ENCODE measurements at regions of chr6 and their contacts with region 1.

Region 1: GRCh38 chr6:34196126-34196830 is 40.4 kb upstream of the HMGA1 start:
- DNase-seq: peak; percentile 79 to 95 (median 88)
- ATAC-seq: peak; percentile 99
- H3K4me3 ChIP-seq: peak overlapping the region; percentile 90
- H3K4me3 Mint-ChIP-seq: peak overlapping the region; percentile 79 to 91 (median 87)
- H3K27ac ChIP-seq: peak overlapping the region; percentile 72
- H3K27ac Mint-ChIP-seq: peak overlapping the region in 5 of 9 donors; percentile 9 to 69 (median 61)
- H3K4me1 ChIP-seq: peaks cover 4 to 6% of the 10 kb centered on the region in 2 donors
- H3K4me1 Mint-ChIP-seq: peaks cover 0 to 11% (median 8%) of the 10 kb centered on the region in 7 donors
- H3K27me3 ChIP-seq: no peaks in the 10 kb centered on the region
- H3K27me3 Mint-ChIP-seq: peaks cover 0 to 13% (median 0%) of the 10 kb centered on the region in 5 donors

Region 2: DNA sequence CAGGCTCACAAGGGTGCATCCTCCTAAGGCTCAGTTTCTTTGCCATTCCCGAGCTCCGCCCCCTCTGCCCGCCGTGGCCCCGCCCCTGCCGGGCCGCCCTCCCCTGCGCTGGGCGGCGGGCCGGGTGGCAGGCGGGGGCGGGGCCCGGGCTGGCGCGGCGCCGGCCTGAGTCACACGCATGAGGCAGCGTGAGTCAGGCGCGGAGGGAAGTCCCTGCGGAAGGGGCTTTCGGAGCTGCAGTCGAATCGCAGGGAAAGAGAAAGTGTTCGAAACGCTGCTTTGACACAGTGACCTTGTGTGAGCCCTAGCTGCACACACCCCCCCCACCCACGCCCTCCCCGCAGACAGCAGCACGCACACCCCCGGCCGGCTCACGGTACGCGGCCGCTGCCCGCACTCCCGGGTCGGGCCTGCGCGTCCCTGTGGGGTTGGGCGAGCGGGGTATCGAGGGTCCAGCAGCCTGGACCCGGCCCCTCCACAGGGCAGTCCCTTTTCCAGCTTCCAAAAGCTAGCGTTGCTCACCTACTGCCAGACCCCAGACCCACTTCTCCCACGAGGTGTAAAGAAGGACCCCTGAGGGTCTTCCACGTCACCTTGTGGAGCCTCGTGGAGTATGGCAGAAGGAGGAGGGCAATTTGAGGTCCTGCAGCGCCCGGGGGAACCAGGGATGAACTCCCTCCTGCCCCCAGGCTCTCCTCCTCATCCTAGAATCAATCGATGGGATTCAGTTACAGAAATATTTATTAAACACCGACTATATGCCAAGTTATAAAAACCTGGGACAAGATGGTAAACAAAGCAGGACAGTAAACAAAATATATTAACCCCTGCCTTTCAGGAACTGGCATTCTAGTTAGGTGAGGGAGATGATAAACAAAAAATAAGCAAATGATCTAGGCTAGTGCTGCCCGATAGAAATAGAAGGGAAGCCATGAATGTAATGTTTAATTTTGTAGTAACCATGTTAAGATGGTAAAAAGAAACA is 28.0 kb after region 1 on chr6:
- CTCF ChIA-PET with region 1: interaction called, 11 read pairs
- POLR2A ChIA-PET with region 1: interaction called, 5 read pairs
- intact Hi-C with region 1: no loop called
- DNase-seq: peak; percentile 85 to 97 (median 91)
- ATAC-seq: peak; percentile 99
- H3K4me3 ChIP-seq: peak overlapping the region; percentile 78
- H3K4me3 Mint-ChIP-seq: peak overlapping the region; percentile 42 to 85 (median 76)
- H3K27ac ChIP-seq: peak overlapping the region; percentile 93
- H3K27ac Mint-ChIP-seq: peak overlapping the region; percentile 82 to 95 (median 88)
- H3K4me1 ChIP-seq: peaks cover 4 to 14% of the 10 kb centered on the region in 2 donors
- H3K4me1 Mint-ChIP-seq: peaks cover 5 to 40% (median 10%) of the 10 kb centered on the region in 7 donors
- H3K27me3 ChIP-seq: no peaks in the 10 kb centered on the region
- H3K27me3 Mint-ChIP-seq: no peaks in the 10 kb centered on the region

Region 3: GRCh38 chr6:34284563-34285447 is 88.5 kb after region 1 on chr6:
- CTCF ChIA-PET with region 1: no interaction called
- POLR2A ChIA-PET with region 1: no interaction called
- intact Hi-C with region 1: no loop called
- DNase-seq: no peak
- ATAC-seq: peak; percentile 85
- H3K4me3 ChIP-seq: no peak overlapping the region
- H3K4me3 Mint-ChIP-seq: peak overlapping the region in 2 of 10 donors; percentile 34 to 41
- H3K27ac ChIP-seq: no peak overlapping the region
- H3K27ac Mint-ChIP-seq: peak overlapping the region in 5 of 9 donors; percentile 53 to 77 (median 74)
- H3K4me1 ChIP-seq: peaks cover 0 to 3% of the 10 kb centered on the region in 2 donors
- H3K4me1 Mint-ChIP-seq: peaks cover 0 to 31% (median 26%) of the 10 kb centered on the region in 7 donors
- H3K27me3 ChIP-seq: no peaks in the 10 kb centered on the region
- H3K27me3 Mint-ChIP-seq: no peaks in the 10 kb centered on the region

Region 4: GRCh38 chr6:34414999-34415858 is 219.0 kb after region 1 on chr6:
- CTCF ChIA-PET with region 1: interaction called, 47 read pairs
- POLR2A ChIA-PET with region 1: interaction called, 13 read pairs
- intact Hi-C with region 1: loop called (anchors 1 kb)
- DNase-seq: peak in 7 of 9 donors; percentile 38 to 63 (median 56)
- ATAC-seq: peak; percentile 88
- H3K4me3 ChIP-seq: no peak overlapping the region
- H3K4me3 Mint-ChIP-seq: no peak overlapping the region
- H3K27ac ChIP-seq: no peak overlapping the region
- H3K27ac Mint-ChIP-seq: peak overlapping the region in 4 of 9 donors; percentile 17 to 56 (median 45)
- H3K4me1 ChIP-seq: no peaks in the 10 kb centered on the region
- H3K4me1 Mint-ChIP-seq: peaks cover 0 to 17% (median 9%) of the 10 kb centered on the region in 7 donors
- H3K27me3 ChIP-seq: no peaks in the 10 kb centered on the region
- H3K27me3 Mint-ChIP-seq: no peaks in the 10 kb centered on the region

Region 5: DNA sequence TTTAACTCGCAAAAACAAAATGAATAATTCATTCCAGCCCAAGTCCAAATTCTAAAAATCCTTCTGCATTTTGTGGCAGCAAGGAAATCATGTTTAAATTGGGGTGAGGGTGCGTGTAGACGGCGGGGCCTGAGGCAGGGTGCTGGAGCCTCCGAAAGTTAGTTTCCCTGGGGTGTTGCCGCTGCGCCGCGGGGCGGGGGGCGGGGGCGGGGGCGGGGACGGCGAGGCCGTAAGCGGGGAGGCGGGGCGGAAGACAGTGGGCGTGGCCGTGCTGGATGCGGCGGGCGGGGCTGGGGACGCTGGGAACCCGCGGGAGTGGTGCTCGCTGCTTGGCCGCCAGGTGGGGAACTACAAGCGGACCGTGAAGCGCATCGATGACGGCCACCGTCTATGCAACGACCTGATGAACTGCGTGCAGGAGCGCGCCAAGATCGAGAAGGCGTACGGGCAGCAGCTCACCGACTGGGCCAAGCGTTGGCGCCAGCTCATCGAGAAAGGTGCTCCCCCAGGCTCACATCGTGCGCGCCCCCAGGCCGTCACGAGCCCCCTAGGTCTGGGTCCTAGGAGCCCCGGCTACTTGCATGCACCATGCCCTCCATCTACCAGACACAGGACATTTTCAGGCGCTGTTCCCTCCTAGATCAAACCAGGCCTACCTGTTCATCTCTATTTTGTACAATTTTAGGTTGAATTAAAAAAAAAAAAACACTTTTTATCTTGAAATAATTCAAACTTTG is 330.9 kb after region 1 on chr6:
- CTCF ChIA-PET with region 1: no interaction called
- POLR2A ChIA-PET with region 1: no interaction called
- intact Hi-C with region 1: loop called in 1 of 2 experiments (anchors 1 kb)
- DNase-seq: peak; percentile 88 to 96 (median 94)
- ATAC-seq: peak; percentile 100
- H3K4me3 ChIP-seq: peak overlapping the region; percentile 33
- H3K4me3 Mint-ChIP-seq: peak overlapping the region; percentile 20 to 69 (median 46)
- H3K27ac ChIP-seq: peak overlapping the region; percentile 70
- H3K27ac Mint-ChIP-seq: peak overlapping the region; percentile 12 to 89 (median 72)
- H3K4me1 ChIP-seq: peaks cover 7 to 14% of the 10 kb centered on the region in 2 donors
- H3K4me1 Mint-ChIP-seq: peaks cover 4 to 12% (median 8%) of the 10 kb centered on the region in 7 donors
- H3K27me3 ChIP-seq: no peaks in the 10 kb centered on the region
- H3K27me3 Mint-ChIP-seq: peaks cover 0 to 2% (median 0%) of the 10 kb centered on the region in 5 donors

Region 6: GRCh38 chr6:35139908-35140655 is 943.8 kb after region 1 on chr6:
- CTCF ChIA-PET with region 1: no interaction called
- POLR2A ChIA-PET with region 1: no interaction called
- intact Hi-C with region 1: loop called in 1 of 2 experiments (anchors 1 kb)
- DNase-seq: peak in 6 of 9 donors; percentile 26 to 50 (median 42)
- ATAC-seq: peak; percentile 46
- H3K4me3 ChIP-seq: no peak overlapping the region
- H3K4me3 Mint-ChIP-seq: peak overlapping the region in 9 of 10 donors; percentile 1 to 76 (median 46)
- H3K27ac ChIP-seq: no peak overlapping the region
- H3K27ac Mint-ChIP-seq: peak overlapping the region in 2 of 9 donors; percentile 38 to 44
- H3K4me1 ChIP-seq: no peaks in the 10 kb centered on the region
- H3K4me1 Mint-ChIP-seq: peaks cover 13 to 22% (median 16%) of the 10 kb centered on the region in 7 donors
- H3K27me3 ChIP-seq: no peaks in the 10 kb centered on the region
- H3K27me3 Mint-ChIP-seq: peaks cover 8 to 35% (median 13%) of the 10 kb centered on the region in 5 donors

Region 7: DNA sequence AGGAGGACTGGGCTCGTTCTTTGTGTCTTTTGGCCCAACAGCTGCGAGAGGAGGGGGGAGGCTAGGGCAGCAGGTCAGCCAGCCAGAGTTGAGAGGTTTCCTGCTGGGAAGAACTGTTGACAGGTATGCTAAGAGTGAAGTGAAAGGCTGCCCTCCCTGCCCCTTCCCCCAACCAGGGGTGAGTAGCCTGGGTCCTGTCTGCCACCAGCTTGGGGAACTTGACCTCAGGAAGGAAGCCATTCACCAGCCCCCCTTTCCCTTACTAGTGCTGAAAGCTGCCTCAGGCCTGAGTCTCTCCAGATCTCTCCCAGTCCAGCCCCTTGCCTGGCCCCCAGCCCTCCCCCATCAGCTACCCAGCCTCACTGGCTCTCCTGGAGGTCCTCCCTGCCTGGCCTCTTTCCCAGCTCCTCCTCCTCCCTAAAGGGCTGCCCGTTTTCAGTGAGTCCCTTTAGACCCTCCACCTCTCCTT is 1042.6 kb after region 1 on chr6:
- CTCF ChIA-PET with region 1: no interaction called
- POLR2A ChIA-PET with region 1: no interaction called
- intact Hi-C with region 1: no loop called
- DNase-seq: no peak
- ATAC-seq: no peak
- H3K4me3 ChIP-seq: no peak overlapping the region
- H3K4me3 Mint-ChIP-seq: no peak overlapping the region
- H3K27ac ChIP-seq: no peak overlapping the region
- H3K27ac Mint-ChIP-seq: no peak overlapping the region
- H3K4me1 ChIP-seq: no peaks in the 10 kb centered on the region
- H3K4me1 Mint-ChIP-seq: peaks cover 1 to 6% (median 4%) of the 10 kb centered on the region in 7 donors
- H3K27me3 ChIP-seq: no peaks in the 10 kb centered on the region
- H3K27me3 Mint-ChIP-seq: peaks cover 0 to 6% (median 0%) of the 10 kb centered on the region in 5 donors

Measured in naive thymus-derived CD4-positive, alpha-beta T cell (primary cell).